H1 (cell line): ENCODE measurements at regions of chr19 and their contacts with region 1.

Region 1: DNA sequence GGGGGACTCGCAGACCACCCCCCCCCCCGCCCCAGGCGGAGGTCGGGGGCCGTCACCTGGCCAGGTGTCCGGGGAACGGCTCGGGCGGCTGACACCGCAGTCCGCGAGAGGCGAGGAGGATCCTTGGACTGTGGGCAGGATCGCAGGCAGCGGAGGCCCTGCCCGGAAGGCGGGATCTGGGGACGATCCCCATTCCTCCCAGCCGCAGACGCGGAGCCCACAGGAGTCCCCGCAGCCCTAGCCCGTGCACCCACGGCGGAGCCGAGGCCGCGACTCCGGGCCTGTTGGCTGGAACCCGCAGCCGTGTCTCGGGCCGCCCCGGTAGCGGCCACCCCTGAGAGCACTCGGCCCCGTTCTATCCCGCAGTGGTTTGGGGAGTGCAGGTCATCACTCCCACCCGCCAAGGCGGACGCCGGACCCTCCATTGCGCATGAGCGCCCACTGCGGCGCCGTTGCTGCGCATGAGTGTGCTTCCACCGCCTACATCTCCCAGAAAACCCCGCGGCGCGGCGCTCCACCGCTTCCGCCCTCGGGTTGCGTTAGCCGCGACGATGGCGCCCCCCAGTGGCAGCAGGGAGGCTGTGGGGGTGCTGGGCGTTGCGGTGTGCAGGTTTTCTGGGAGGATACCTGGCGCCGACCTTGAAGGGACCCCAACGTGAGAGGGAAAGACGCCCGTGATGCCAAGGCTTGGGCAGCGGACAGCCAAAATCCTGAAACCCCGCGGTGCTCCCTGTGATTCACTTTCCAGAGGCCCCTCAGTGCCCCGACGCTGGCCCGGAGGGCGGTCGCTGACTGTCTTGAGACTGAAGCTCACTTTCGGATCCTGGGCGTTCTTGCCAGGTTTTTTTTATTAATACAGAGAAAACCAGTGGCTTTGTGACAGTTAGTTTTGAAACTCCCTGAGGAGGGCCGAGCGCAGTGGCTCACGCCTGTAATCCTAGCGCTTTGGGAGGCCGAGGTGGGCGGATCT is 4.4 kb upstream of the ZNF329 start:
- DNase-seq: peak; percentile 82 to 100
- H3K4me3 ChIP-seq: peak overlapping the region; percentile 74 to 91 (median 82)
- H3K27ac ChIP-seq: peak overlapping the region; percentile 75; the same call in 1 of the 2 replicates
- H3K4me1 ChIP-seq: no peaks in the 10 kb centered on the region; a peak in 2 of 7 replicates
- H3K27me3 ChIP-seq: no peaks in the 10 kb centered on the region
- CTCF ChIP-seq: peak; percentile 97 to 98 (median 97)
- EP300 ChIP-seq: 0 out of 3 replicates have a peak, but pooled peaks of 1 of the 2 experiments have one; percentile 23
- POLR2A ChIP-seq: peak in 1 of 2 experiments; percentile 72; a peak in 2 of 3 replicates
- RAD21 ChIP-seq: peak; percentile 99

Region 2: DNA sequence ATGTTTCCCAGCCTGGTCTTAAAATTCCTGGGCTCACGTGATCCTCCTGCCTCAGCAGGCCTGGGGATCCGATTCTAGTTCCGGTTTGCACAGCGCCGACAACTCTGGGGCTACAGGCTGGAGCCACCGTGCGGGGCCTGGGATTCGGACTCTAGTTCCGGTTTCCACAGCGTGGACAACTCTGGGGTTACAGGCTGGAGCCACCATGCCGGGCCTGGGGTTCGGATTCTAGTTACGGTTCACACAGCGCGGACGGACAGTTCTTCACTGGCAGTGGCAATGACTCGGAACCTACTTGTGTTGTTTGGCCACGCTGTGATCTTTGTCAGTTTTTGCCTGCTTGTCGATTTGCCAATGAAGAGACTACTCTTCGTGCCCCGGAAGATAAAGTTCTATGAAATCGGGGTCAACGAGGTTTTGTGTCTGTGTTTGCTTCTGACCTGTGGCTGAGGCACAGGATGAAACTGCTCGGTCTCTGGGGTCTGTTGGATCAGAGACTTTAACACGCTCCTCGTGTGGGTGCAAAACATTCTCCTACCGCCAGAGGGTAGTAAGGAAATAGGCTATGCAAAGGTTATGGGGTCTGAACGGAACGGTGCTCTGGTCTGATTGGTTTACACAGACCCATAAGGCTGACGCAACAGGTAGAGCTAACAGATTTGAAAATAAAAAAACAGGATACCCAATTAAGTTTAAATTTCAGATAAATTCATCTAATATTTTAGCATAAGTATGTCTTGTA is 133.3 kb before region 1 on chr19:
- CTCF ChIA-PET with region 1: interaction called, 34 read pairs
- POLR2A ChIA-PET with region 1: interaction called, 7 read pairs
- DNase-seq: peak in 1 of 2 experiments; percentile 72
- H3K4me3 ChIP-seq: no peak overlapping the region
- H3K27ac ChIP-seq: no peak overlapping the region
- H3K4me1 ChIP-seq: no peaks in the 10 kb centered on the region
- H3K27me3 ChIP-seq: no peaks in the 10 kb centered on the region; a peak in 3 of 7 replicates
- CTCF ChIP-seq: peak; percentile 46 to 84 (median 71)
- EP300 ChIP-seq: no peak
- POLR2A ChIP-seq: no peak
- RAD21 ChIP-seq: peak; percentile 88 to 91

Region 3: GRCh38 chr19:58033741-58034471 is 121.1 kb before region 1 on chr19 and contains the start of gene ZSCAN1:
- CTCF ChIA-PET with region 1: interaction called, 3 read pairs
- POLR2A ChIA-PET with region 1: interaction called, 12 read pairs
- DNase-seq: peak; percentile 70 to 96
- H3K4me3 ChIP-seq: peak within 1 kb of the TSS; percentile 49 to 77 (median 60)
- H3K27ac ChIP-seq: peak within 1 kb of the TSS; percentile 59; the same call in 1 of the 2 replicates
- H3K4me1 ChIP-seq: peaks cover 0 to 19% (median 14%) of the 10 kb centered on the region in 4 experiments; a peak in 6 of 7 replicates
- H3K27me3 ChIP-seq: peaks cover 0 to 6% (median 0%) of the 10 kb centered on the region in 4 experiments; a peak in 3 of 7 replicates
- CTCF ChIP-seq: no peak
- EP300 ChIP-seq: no peak
- POLR2A ChIP-seq: 0 out of 3 replicates have a peak, but pooled peaks of 1 of the 2 experiments have one; percentile 40
- RAD21 ChIP-seq: no peak; a peak in 1 of 4 replicates
- total RNA-seq, gene ZSCAN1: 0.69 and 1.2 TPM in 2 replicates

Region 4: DNA sequence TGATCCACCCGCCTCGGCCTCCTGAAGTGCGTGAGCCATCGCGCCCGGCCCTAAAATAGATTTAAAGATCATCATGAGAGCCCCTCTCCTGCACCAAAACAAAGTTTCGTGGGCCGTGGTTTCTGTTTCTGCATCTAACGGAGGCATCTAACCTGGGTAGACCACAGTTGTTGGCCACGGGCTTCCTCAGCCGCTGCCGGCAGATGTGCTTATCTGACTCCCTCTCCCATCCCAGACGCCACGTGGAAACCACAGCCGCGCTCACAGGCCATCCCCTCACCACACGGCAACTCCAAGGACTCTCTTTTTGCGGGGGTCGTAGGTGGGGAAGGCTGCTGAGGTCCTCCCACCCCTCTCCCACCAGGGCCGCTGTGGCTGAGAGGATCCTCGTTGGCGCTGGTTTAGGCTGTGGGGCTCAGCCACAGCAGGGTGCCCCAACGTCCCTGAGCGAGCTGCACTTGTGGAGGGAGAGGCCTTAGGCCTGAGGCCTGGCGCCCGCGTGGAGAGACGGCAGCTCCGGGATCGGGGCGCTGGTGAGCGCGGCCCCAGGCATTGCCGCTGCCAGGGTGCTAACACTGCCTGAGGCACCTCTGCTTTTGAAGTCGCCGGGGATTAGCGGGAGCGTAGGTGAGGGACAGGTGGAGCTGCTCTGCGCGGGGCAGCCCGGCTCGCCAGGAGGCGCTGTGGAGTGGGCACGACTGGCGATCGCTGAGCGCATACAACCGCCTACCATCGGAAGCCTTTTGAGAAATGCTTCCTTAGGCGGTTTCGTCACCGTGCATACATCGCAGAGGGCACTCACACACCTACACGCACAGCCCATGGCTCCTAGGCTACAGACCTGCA is 112.2 kb before region 1 on chr19:
- CTCF ChIA-PET with region 1: interaction called, 12 read pairs
- POLR2A ChIA-PET with region 1: interaction called, 12 read pairs
- DNase-seq: peak; percentile 84 to 87
- H3K4me3 ChIP-seq: peak overlapping the region in 2 of 4 experiments; percentile 4 to 44; a peak in 1 of 8 replicates
- H3K27ac ChIP-seq: no peak overlapping the region
- H3K4me1 ChIP-seq: peaks cover 0 to 17% (median 11%) of the 10 kb centered on the region in 4 experiments; a peak in 6 of 7 replicates
- H3K27me3 ChIP-seq: peaks cover 0 to 5% (median 4%) of the 10 kb centered on the region in 4 experiments; a peak in 3 of 7 replicates
- CTCF ChIP-seq: peak; percentile 87 to 97 (median 91)
- EP300 ChIP-seq: no peak; a peak in 1 of 3 replicates
- POLR2A ChIP-seq: no peak
- RAD21 ChIP-seq: peak; percentile 75 to 79